Dorsolateral prefrontal cortex (tissue), 120 donors: ENCODE measurements at regions of chr13 and their contacts with region 1.

Region 1: GRCh38 chr13:77697217-77698103 is at the start of gene SLAIN1:
- DNase-seq: peak; percentile 78 to 96 (median 90)
- H3K4me3 ChIP-seq: peak within 1 kb of the TSS; percentile 59 to 97 (median 85)
- H3K27ac ChIP-seq: peak within 1 kb of the TSS; percentile 19 to 97 (median 94)
- H3K27me3 ChIP-seq: no peaks in the 10 kb centered on the region
- CTCF ChIP-seq: peak in 21 of 56 donors; percentile 4 to 46 (median 23)
- total RNA-seq, gene SLAIN1: 103 to 777 (median 227) TPM

Region 2: DNA sequence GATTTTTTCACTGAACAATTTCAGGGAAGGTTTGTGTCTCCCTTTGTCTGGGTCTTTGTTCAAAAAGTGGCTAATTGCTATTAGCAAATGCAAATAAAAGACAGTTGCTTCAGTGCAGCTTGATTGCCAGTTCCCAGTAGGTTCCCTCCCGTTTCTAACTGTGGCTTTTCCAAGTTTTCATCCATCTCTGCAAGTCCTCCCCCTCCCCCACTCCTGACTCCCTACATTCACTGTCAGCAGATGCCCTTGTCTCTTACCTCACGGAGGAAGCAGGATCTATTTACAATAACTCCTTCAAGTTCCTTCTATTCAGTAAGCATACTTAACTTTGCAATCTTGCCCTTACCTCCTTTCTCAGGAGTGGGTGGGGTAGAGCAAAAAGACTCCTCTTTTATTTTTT is 217.4 kb before region 1 on chr13:
- intact Hi-C with region 1: loop called in 1 of 2 experiments (anchors 10 kb)
- DNase-seq: no peak
- H3K4me3 ChIP-seq: no peak overlapping the region
- H3K27ac ChIP-seq: peak overlapping the region in 1 of 59 donors; percentile 28
- H3K27me3 ChIP-seq: no peaks in the 10 kb centered on the region
- CTCF ChIP-seq: no peak

Region 3: GRCh38 chr13:77584106-77584505 is 113.4 kb before region 1 on chr13:
- intact Hi-C with region 1: loop called (anchors 1 to 5 kb)
- DNase-seq: peak; percentile 72 to 95 (median 86)
- H3K4me3 ChIP-seq: peak overlapping the region in 54 of 59 donors; percentile 4 to 64 (median 43)
- H3K27ac ChIP-seq: peak overlapping the region; percentile 72 to 99 (median 93)
- H3K27me3 ChIP-seq: no peaks in the 10 kb centered on the region
- CTCF ChIP-seq: no peak

Region 4: DNA sequence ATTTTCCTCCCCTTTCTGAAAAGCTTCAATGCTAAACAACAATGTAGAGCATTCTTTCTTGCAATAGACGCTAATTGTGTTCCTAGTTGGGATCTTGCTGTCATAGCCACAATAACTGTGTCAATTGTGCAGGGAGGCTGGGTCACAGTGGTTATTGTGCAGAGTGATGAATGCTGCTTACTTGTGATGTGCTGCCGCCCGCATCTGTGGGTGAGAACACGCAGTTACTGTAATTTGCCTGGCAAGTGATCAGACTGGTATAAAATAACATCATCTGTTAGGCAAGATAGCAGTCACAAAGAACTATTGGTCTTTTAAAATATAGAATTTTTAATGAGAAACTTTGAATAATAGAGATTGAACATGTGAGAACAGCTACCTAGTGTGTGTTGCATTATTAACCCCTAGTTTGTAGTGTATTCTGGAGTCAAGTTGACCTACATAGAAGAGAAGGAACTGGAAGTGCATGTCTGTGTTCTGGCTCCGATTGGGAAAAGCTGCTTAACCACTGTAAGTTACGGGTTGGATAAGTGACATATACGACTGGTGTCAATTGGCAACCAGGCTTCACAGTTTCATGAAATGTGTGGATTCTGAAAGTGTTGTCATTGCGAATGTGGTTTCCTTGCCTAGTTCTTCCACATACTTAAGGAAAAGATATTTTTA is 43.6 kb after region 1 on chr13:
- intact Hi-C with region 1: loop called (anchors 1 to 2 kb)
- DNase-seq: peak; percentile 40 to 95 (median 84)
- H3K4me3 ChIP-seq: peak overlapping the region in 57 of 59 donors; percentile 15 to 69 (median 45)
- H3K27ac ChIP-seq: peak overlapping the region; percentile 71 to 98 (median 93)
- H3K27me3 ChIP-seq: no peaks in the 10 kb centered on the region
- CTCF ChIP-seq: peak in 3 of 56 donors; percentile 11 to 40 (median 14)

Region 5: DNA sequence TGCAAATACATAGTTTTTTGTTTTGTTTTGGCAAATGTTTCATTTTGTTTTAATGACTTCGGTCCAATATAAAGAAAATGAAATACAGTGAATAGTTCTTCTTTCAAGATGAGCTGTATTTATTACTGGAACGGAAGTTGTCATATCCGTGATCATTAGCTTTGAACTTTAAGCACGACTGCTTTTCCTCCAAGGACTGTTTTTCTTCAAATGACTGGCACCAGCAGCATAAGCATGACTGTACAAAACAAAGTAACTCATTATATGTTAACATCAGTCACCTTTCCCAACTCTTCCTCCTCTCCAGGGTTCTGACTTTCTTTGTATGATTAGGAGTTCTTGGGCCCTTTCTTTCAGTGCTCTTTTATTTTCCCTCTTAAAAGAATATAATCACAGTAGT is 200.6 kb after region 1 on chr13:
- intact Hi-C with region 1: no loop called
- DNase-seq: no peak
- H3K4me3 ChIP-seq: peak overlapping the region in 1 of 59 donors; percentile 5
- H3K27ac ChIP-seq: peak overlapping the region in 3 of 59 donors; percentile 2 to 5 (median 2)
- H3K27me3 ChIP-seq: no peaks in the 10 kb centered on the region
- CTCF ChIP-seq: no peak

Region 6: GRCh38 chr13:78309497-78310180 is 612.2 kb after region 1 on chr13:
- intact Hi-C with region 1: no loop called
- DNase-seq: no peak
- H3K4me3 ChIP-seq: no peak overlapping the region
- H3K27ac ChIP-seq: no peak overlapping the region
- H3K27me3 ChIP-seq: peaks cover 0 to 4% (median 0%) of the 10 kb centered on the region in 45 donors
- CTCF ChIP-seq: no peak